PC-9 (cell line): ENCODE measurements at regions of chr11 and their contacts with region 1.

Region 1: GRCh38 chr11:73177778-73178577 is 35.9 kb upstream of the FCHSD2 start:
- DNase-seq: peak; percentile 69 to 84
- H3K4me3 ChIP-seq: no peak overlapping the region
- H3K27ac ChIP-seq: no peak overlapping the region
- H3K4me1 ChIP-seq: peaks cover 22% of the 10 kb centered on the region
- H3K27me3 ChIP-seq: no peaks in the 10 kb centered on the region
- CTCF ChIP-seq: peak; percentile 93

Region 2: GRCh38 chr11:72471005-72471898 is 706.7 kb before region 1 on chr11:
- CTCF ChIA-PET with region 1: interaction called, 6 read pairs
- POLR2A ChIA-PET with region 1: no interaction called
- intact Hi-C with region 1: loop called (anchors 2 kb)
- DNase-seq: peak; percentile 52 to 64
- H3K4me3 ChIP-seq: no peak overlapping the region
- H3K27ac ChIP-seq: no peak overlapping the region
- H3K4me1 ChIP-seq: no peaks in the 10 kb centered on the region
- H3K27me3 ChIP-seq: peaks cover 14% of the 10 kb centered on the region; the same call in 1 of the 2 replicates
- CTCF ChIP-seq: peak; percentile 96

Region 3: DNA sequence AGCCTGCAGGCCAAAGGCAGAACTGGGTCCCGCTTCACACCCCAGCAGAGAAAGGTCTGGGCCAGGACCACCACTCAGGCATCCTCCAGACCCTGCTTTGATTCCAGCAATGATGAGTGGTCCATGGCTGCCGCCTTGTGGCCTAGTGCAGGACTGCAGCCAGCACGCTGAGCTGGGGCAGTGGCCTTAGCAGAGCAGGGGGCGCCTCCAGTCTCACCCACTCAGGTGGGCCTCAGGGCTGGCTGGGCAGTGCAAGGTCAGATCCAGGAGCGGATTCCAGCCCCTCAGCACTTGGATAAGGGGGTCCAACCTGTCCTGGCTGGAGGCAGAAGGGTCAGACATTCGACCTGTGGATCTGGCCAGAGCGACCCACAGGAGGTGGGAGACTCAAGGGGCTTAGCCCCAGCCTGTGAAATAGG is 494.2 kb before region 1 on chr11:
- CTCF ChIA-PET with region 1: no interaction called
- POLR2A ChIA-PET with region 1: no interaction called
- intact Hi-C with region 1: loop called (anchors 1 kb)
- DNase-seq: peak in 1 of 2 experiments; percentile 71
- H3K4me3 ChIP-seq: no peak overlapping the region
- H3K27ac ChIP-seq: no peak overlapping the region
- H3K4me1 ChIP-seq: 0 out of 2 replicates have a peak, but pooled peaks cover 3% of the 10 kb centered on the region
- H3K27me3 ChIP-seq: 0 out of 2 replicates have a peak, but pooled peaks cover 5% of the 10 kb centered on the region
- CTCF ChIP-seq: peak; percentile 97

Region 4: DNA sequence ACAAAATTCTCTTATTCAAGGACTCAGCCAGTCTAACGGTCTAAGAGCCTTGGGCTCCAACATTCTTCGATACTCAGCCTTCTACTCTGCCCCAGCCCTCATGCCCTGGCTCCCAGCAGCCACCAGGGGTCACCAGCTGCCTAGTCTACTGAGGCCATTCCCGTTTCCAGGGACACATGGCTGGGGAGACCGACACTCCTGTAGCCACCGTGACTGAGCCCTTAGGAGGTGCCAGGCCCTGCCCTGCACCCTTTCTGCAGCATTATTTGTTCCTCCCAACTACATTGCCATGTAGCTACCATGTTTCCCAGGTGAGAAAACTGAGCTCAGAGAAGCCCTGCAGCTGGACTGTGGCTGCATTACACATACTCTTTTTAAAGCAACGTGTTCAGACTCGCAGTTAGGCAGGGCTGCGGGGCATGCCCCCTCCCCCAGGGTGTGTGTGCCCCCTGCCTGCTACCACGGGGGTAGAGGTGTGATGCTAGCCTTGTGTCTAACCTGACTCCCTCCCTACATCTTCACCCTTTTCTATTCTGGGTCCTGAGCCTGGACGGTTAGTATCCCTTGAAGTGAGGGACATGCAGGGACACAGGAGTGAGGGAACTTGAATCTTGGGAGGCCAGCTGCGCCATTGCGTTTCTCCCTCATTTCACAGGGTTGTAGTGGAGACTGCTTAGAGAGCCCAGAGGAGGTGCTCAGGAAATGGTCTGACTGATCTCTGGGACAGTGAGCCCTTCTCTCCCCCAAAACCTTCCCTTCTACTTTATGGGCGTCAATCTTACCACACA is 346.3 kb before region 1 on chr11:
- CTCF ChIA-PET with region 1: interaction called, 22 read pairs
- POLR2A ChIA-PET with region 1: no interaction called
- intact Hi-C with region 1: loop called (anchors 1 kb)
- DNase-seq: peak; percentile 61 to 85
- H3K4me3 ChIP-seq: no peak overlapping the region
- H3K27ac ChIP-seq: no peak overlapping the region
- H3K4me1 ChIP-seq: 0 out of 2 replicates have a peak, but pooled peaks cover 4% of the 10 kb centered on the region
- H3K27me3 ChIP-seq: no peaks in the 10 kb centered on the region
- CTCF ChIP-seq: peak; percentile 97

Region 5: DNA sequence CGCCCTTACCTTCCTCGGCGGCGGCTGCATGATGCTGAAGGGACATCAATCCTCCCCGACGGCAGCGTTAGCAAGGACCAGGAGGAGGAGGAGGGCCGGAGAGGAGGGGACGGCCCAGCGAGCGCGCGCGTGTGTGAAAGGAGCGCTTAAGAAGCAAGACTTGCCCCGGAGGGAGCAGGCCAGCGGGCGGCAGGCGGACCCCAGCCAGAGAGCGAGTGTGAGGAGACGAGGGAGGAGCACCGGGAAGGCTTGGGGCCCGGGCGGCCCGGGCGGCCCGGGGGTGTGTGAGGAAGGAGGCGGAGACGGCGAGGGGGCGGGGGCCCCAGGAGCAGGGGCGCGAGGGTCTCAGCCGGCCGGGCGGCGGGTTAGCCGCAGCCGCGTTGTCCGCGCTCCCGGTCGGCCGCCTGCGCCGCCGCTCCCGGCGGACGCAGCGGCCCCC is 36.1 kb before region 1 on chr11:
- CTCF ChIA-PET with region 1: interaction called, 14 read pairs
- POLR2A ChIA-PET with region 1: no interaction called
- intact Hi-C with region 1: loop called (anchors 2 kb)
- DNase-seq: peak; percentile 64 to 74
- H3K4me3 ChIP-seq: peak overlapping the region; percentile 98
- H3K27ac ChIP-seq: peak overlapping the region; percentile 48; the same call in 1 of the 2 replicates
- H3K4me1 ChIP-seq: peaks cover 20% of the 10 kb centered on the region
- H3K27me3 ChIP-seq: no peaks in the 10 kb centered on the region
- CTCF ChIP-seq: no peak

Region 6: DNA sequence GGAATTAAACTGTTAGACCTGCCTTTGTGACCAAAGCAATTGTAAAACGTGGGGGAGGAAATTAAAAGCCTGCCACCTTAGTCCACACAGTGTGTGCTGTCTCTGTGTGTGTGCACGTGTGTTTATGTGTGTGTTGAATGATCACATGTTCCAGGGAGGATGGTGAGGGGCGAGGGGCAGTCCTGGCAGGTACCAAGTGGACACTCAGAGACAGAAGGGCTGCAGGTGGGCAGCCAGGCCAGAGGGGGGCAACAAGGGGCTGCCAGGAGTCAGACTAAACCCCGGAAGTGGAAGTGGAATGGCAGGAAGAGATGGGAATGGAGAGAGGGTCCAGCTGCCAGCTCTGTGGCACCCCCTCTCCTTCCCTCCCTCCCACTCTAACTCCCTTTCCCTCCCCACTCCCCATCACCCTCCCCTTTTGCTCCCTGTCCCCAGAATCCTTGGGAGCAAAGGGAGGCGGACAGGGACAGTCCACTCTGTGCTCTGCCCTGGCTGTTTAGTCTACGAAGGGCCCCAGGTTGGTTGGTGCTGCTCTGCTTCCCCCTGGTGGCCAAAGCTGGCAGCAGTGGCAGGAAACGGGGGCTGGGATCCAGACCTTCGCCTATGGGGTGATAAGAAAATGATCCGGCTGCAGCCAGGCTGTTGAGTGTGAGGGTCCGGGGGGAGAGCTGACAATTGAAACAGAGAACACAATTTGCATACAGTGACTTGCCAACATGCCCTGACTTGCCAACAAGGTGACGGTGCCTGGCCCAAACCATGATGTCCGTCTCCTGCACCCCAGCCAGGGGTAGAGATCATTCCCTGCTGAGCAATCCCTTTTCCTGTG is 64.5 kb after region 1 on chr11:
- CTCF ChIA-PET with region 1: interaction called, 10 read pairs
- POLR2A ChIA-PET with region 1: interaction called, 5 read pairs
- intact Hi-C with region 1: no loop called
- DNase-seq: peak in 1 of 2 experiments; percentile 79
- H3K4me3 ChIP-seq: no peak overlapping the region
- H3K27ac ChIP-seq: no peak overlapping the region
- H3K4me1 ChIP-seq: peaks cover 44% of the 10 kb centered on the region
- H3K27me3 ChIP-seq: no peaks in the 10 kb centered on the region
- CTCF ChIP-seq: peak; percentile 94